ENCODE measurements at regions of chr13 and their contacts with region 1.

Region 1: GRCh38 chr13:27374650-27375049 is 49.8 kb upstream of the GTF3A start:
- DNase-seq: peak; percentile 74
- ATAC-seq: peak; percentile 80
- H3K4me3 ChIP-seq: peak overlapping the region in 1 of 3 experiments; percentile 33; a peak in 1 of 6 replicates
- H3K27ac ChIP-seq: no peak overlapping the region
- H3K4me1 ChIP-seq: peaks cover 42% of the 10 kb centered on the region
- H3K27me3 ChIP-seq: peaks cover 0 to 17% of the 10 kb centered on the region in 2 experiments; a peak in 4 of 5 replicates
- CTCF ChIP-seq: peak; percentile 87
- EP300 ChIP-seq: no peak
- POLR2A ChIP-seq: no peak
- RAD21 ChIP-seq: peak; percentile 73

Region 2: DNA sequence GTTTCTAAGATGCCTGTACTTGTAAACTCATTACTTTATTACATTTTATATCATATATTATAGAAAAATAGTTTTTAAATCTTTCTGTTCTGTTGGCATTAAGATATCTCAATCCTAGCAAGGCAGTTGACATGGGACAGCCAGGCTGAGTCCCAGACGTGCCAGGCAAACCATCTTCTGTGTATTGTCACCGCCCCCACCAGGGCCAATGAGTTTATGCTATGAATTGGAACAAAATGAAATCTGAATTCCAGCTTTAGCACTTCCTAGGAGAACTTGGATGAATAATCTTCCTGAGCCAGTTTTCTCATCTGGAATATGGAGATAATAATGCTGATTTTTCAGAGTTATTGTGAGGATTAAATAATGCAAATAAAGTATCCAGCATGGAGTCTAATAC is 337.8 kb after region 1 on chr13:
- CTCF ChIA-PET with region 1: interaction called, 3 read pairs
- POLR2A ChIA-PET with region 1: no interaction called
- in situ Hi-C with region 1: loop called (anchors 10 kb)
- intact Hi-C with region 1: loop called (anchors 5 kb)
- DNase-seq: peak; percentile 36
- ATAC-seq: peak; percentile 84
- H3K4me3 ChIP-seq: no peak overlapping the region
- H3K27ac ChIP-seq: no peak overlapping the region
- H3K4me1 ChIP-seq: peaks cover 16% of the 10 kb centered on the region; the same call in 1 of the 2 replicates
- H3K27me3 ChIP-seq: peaks cover 0 to 1% of the 10 kb centered on the region in 2 experiments; a peak in 2 of 5 replicates
- CTCF ChIP-seq: peak; percentile 69
- EP300 ChIP-seq: no peak
- POLR2A ChIP-seq: no peak
- RAD21 ChIP-seq: peak; percentile 51